Left lung (tissue), 14 donors: ENCODE measurements at regions of chr12 and their contacts with region 1.

Region 1: GRCh38 chr12:120640840-120641833 is 711 bp downstream of the CABP1 start:
- DNase-seq: peak; percentile 48 to 88 (median 58)
- ATAC-seq: peak; percentile 95
- H3K4me3 ChIP-seq: peak overlapping the region; percentile 21 to 40
- H3K27ac ChIP-seq: no peak overlapping the region
- H3K4me1 ChIP-seq: peaks cover 6 to 15% of the 10 kb centered on the region in 2 donors
- H3K27me3 ChIP-seq: peaks cover 21 to 79% of the 10 kb centered on the region in 2 donors
- CTCF ChIP-seq: no peak

Region 2: GRCh38 chr12:119911182-119911581 is 730.0 kb before region 1 on chr12:
- intact Hi-C with region 1: no loop called
- DNase-seq: no peak
- ATAC-seq: no peak
- H3K4me3 ChIP-seq: no peak overlapping the region
- H3K27ac ChIP-seq: no peak overlapping the region
- H3K4me1 ChIP-seq: no peaks in the 10 kb centered on the region
- H3K27me3 ChIP-seq: no peaks in the 10 kb centered on the region
- CTCF ChIP-seq: no peak

Region 3: GRCh38 chr12:120528861-120529525 is 112.1 kb before region 1 on chr12 and contains the start of gene COQ5:
- intact Hi-C with region 1: no loop called
- DNase-seq: peak; percentile 92 to 96 (median 93)
- ATAC-seq: peak; percentile 95
- H3K4me3 ChIP-seq: peak within 1 kb of the TSS; percentile 59 to 78
- H3K27ac ChIP-seq: peak within 1 kb of the TSS; percentile 89 to 95
- H3K4me1 ChIP-seq: peaks cover 6 to 31% of the 10 kb centered on the region in 2 donors
- H3K27me3 ChIP-seq: no peaks in the 10 kb centered on the region
- CTCF ChIP-seq: no peak
- polyA plus RNA-seq, gene COQ5: 44.5 to 58.8 (median 51.9) TPM

Region 4: GRCh38 chr12:120686151-120686689 is 45.1 kb after region 1 on chr12:
- intact Hi-C with region 1: no loop called
- DNase-seq: peak in 3 of 4 donors; percentile 99
- ATAC-seq: peak; percentile 90
- H3K4me3 ChIP-seq: peak overlapping the region; percentile 71 to 95
- H3K27ac ChIP-seq: peak overlapping the region; percentile 87 to 96
- H3K4me1 ChIP-seq: peaks cover 15 to 58% of the 10 kb centered on the region in 2 donors
- H3K27me3 ChIP-seq: no peaks in the 10 kb centered on the region
- CTCF ChIP-seq: no peak

Region 5: GRCh38 chr12:120914794-120915193 is 273.7 kb after region 1 on chr12:
- intact Hi-C with region 1: no loop called
- DNase-seq: no peak
- ATAC-seq: no peak
- H3K4me3 ChIP-seq: no peak overlapping the region
- H3K27ac ChIP-seq: no peak overlapping the region
- H3K4me1 ChIP-seq: no peaks in the 10 kb centered on the region
- H3K27me3 ChIP-seq: no peaks in the 10 kb centered on the region
- CTCF ChIP-seq: no peak

Region 6: GRCh38 chr12:120971299-120972179 is 330.4 kb after region 1 on chr12:
- intact Hi-C with region 1: loop called in 1 of 2 experiments (anchors 10 kb)
- DNase-seq: peak in 2 of 4 donors; percentile 47 to 58
- ATAC-seq: peak; percentile 87
- H3K4me3 ChIP-seq: no peak overlapping the region
- H3K27ac ChIP-seq: no peak overlapping the region
- H3K4me1 ChIP-seq: peaks cover 0 to 8% of the 10 kb centered on the region in 2 donors
- H3K27me3 ChIP-seq: no peaks in the 10 kb centered on the region
- CTCF ChIP-seq: peak; percentile 60 to 72